Common myeloid progenitor, CD34-positive (primary cell): ENCODE measurements at regions of chr2 and their contacts with region 1.

Region 1: GRCh38 chr2:200713003-200713703 is 98.6 kb upstream of the BZW1 start:
- DNase-seq: peak; percentile 98 to 99 (median 98)
- H3K4me3 ChIP-seq: peak overlapping the region in 4 of 7 experiments; percentile 23 to 69 (median 50)
- H3K27ac ChIP-seq: peak overlapping the region; percentile 79 to 84
- H3K4me1 ChIP-seq: peaks cover 0 to 14% (median 10%) of the 10 kb centered on the region in 4 experiments
- H3K27me3 ChIP-seq: no peaks in the 10 kb centered on the region

Region 2: DNA sequence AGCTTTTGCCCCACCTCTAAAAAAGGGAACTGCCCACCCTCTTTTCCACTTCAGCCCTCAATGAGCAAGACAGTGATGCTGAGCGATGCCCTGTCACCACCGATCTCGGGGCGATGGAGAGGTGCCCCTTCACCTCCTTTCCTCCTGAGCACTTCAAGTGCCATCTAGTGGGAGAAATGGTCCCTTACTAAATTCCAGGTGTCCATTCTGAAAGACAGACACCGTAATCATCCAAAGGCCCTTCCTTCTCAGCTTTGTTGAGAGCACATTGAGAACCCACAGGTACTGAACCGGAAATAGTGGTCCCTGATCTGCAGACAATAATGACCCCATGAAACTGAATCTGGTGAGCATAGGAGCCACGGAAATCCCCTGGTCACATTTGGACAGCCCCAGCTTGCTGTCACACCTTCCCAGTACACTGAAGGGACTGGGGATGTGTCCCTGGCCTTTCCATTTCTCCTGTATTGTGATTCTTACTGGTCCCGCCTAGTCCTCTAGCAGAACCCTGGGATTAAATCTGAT is 241.8 kb before region 1 on chr2:
- CTCF ChIA-PET with region 1: no interaction called
- POLR2A ChIA-PET with region 1: no interaction called
- DNase-seq: peak; percentile 60 to 81 (median 76)
- H3K4me3 ChIP-seq: no peak overlapping the region
- H3K27ac ChIP-seq: no peak overlapping the region
- H3K4me1 ChIP-seq: no peaks in the 10 kb centered on the region
- H3K27me3 ChIP-seq: no peaks in the 10 kb centered on the region

Region 3: DNA sequence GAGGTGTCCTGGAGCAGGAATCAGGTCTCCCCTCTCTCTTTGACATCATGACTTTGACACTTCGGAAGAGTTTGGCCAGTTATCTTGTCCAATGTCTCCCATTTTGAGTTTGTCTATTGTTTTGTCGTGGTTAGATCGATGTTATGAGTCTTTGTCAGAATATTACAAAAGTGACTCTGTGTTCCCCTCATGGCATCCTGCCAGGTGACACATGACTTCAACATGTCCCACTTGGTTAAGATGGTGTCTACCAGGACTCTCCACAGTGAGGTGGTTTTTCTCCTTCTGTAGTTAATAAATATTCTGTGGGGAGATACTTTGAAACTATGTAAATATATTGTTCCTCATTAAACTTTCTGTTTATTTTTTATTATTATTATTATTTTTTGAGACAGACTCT is 21.9 kb after region 1 on chr2:
- CTCF ChIA-PET with region 1: interaction called, 92 read pairs
- POLR2A ChIA-PET with region 1: no interaction called
- DNase-seq: peak in 2 of 3 donors; percentile 11
- H3K4me3 ChIP-seq: no peak overlapping the region
- H3K27ac ChIP-seq: no peak overlapping the region
- H3K4me1 ChIP-seq: no peaks in the 10 kb centered on the region
- H3K27me3 ChIP-seq: no peaks in the 10 kb centered on the region